HepG2 (cell line): ENCODE measurements at regions of chr1 and their contacts with region 1.

Region 1: DNA sequence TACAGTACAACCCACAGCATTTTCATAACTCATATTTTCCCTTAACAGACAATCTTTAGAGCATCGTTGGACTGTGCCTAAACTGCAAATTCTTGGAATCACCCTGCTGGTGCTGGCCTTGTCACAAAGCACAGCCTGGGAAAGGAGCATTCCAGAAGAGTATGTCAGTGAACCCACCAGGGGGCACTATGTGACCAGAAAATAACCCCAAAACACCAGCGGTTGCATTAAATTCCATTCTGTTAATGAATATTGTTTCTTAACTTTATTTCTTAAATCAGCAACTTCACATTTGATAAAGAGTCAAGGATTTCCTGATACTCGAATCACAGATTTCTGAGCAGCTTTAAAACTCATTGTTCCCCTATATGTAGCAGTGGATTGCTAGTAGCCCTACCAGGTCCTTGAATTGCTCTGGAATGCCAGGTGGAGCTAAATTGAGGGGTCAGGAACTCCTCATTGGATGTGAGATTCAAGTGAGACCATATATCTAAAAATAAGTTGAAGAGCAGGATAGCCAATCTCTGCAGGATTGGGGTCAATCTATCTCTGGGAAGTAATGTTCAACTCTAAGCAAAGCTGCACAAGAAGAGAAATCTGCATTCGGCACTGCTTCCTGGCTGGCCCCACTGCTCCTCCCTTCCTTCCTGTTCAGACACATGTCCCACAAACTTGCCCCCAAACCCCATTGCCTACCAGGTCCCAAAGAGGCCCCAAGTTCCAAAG is 12.7 kb upstream of the RAB4A start:
- DNase-seq: peak; percentile 66
- ATAC-seq: peak; percentile 87
- H3K4me3 ChIP-seq: no peak overlapping the region
- H3K27ac ChIP-seq: no peak overlapping the region
- H3K4me1 ChIP-seq: peaks cover 35% of the 10 kb centered on the region
- H3K27me3 ChIP-seq: no peaks in the 10 kb centered on the region
- CTCF ChIP-seq: peak; percentile 84
- EP300 ChIP-seq: no peak
- POLR2A ChIP-seq: no peak
- RAD21 ChIP-seq: peak; percentile 84

Region 2: GRCh38 chr1:228664399-228664914 is 593.7 kb before region 1 on chr1:
- CTCF ChIA-PET with region 1: interaction called, 4 read pairs
- POLR2A ChIA-PET with region 1: no interaction called
- in situ Hi-C with region 1: no loop called
- intact Hi-C with region 1: loop called (anchors 1 kb)
- DNase-seq: peak; percentile 68
- ATAC-seq: peak; percentile 62; the same call in 2 of the 3 replicates
- H3K4me3 ChIP-seq: peak overlapping the region in 2 of 3 experiments; percentile 34 to 40; a peak in 2 of 6 replicates
- H3K27ac ChIP-seq: no peak overlapping the region
- H3K4me1 ChIP-seq: peaks cover 17% of the 10 kb centered on the region
- H3K27me3 ChIP-seq: no peaks in the 10 kb centered on the region
- CTCF ChIP-seq: peak; percentile 85
- EP300 ChIP-seq: no peak
- POLR2A ChIP-seq: no peak
- RAD21 ChIP-seq: peak; percentile 89

Region 3: DNA sequence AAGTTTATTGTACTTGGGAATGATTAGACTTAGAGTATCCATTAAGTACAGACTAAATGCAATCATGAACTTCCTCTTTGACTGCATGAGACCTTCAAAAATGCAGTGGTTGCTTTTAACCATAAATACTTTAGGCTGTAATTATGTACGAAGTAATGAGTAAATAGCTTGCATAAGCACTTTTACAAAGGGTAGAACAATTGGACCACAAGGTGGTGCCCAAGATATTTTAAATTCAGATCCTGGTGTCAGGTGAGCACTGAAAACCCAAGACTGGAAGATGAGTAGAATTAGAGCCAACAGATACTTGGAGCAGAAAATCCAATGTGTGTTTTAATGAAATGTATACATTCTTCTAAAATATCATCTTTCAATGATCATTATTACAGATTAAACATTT is 566.3 kb before region 1 on chr1:
- CTCF ChIA-PET with region 1: interaction called, 6 read pairs
- POLR2A ChIA-PET with region 1: no interaction called
- in situ Hi-C with region 1: no loop called
- intact Hi-C with region 1: loop called (anchors 10 kb)
- DNase-seq: peak; percentile 72
- ATAC-seq: 0 out of 3 replicates have a peak, but pooled peaks have one; percentile 40
- H3K4me3 ChIP-seq: no peak overlapping the region
- H3K27ac ChIP-seq: no peak overlapping the region
- H3K4me1 ChIP-seq: peaks cover 17% of the 10 kb centered on the region; the same call in 1 of the 2 replicates
- H3K27me3 ChIP-seq: no peaks in the 10 kb centered on the region; a peak in 1 of 5 replicates
- CTCF ChIP-seq: peak; percentile 60
- EP300 ChIP-seq: no peak
- POLR2A ChIP-seq: no peak
- RAD21 ChIP-seq: peak; percentile 53

Region 4: DNA sequence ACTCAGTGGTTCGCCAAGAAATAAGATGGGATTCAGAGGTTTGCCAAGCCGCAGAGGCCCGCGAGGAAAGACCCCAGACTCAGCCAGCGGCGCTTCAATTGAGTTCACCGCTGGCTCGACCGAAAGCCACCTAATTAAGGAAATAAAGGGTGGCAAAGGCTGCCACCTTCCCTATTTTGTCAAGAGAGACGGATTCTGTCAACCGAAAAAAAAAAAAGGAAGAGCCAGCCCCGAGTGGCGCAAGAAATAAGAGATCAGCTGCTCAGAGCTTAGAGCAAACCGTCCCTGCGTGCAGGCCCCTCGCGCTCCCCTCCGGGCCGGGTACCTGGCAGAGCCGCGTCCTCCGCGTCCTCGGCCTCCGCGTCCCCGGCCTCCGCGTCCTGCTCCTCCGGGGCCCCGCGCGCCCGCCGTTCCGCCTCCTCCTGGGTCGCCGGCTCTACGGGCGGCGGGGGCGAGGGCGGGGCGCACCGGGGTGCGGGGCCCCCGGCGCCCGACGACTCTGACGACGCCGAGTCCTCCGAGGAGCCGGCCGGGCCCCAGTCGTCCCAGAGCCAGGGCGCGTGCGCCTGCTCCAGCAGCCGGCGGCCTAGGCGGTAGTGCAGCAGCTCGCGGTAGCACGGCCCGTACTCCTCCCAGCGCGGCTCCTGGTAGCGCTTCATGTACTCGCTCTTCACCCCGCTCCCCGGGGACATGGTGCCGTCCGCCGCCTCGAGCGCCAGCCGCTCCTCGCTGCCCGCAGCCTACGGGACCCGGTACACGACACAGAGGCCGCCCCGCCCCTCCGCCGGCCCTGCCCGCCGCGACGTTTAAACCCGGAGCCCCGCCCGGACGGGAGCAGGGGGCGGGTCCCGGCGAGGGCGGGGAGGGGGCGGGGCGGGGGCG is 83.8 kb after region 1 on chr1:
- CTCF ChIA-PET with region 1: no interaction called
- POLR2A ChIA-PET with region 1: no interaction called
- in situ Hi-C with region 1: no loop called
- intact Hi-C with region 1: loop called (anchors 5 kb)
- DNase-seq: peak; percentile 51
- ATAC-seq: peak; percentile 82
- H3K4me3 ChIP-seq: peak overlapping the region; percentile 77 to 95 (median 83)
- H3K27ac ChIP-seq: peak overlapping the region; percentile 75
- H3K4me1 ChIP-seq: peaks cover 62% of the 10 kb centered on the region
- H3K27me3 ChIP-seq: peaks cover 0 to 6% of the 10 kb centered on the region in 2 experiments; a peak in 1 of 5 replicates
- CTCF ChIP-seq: no peak
- EP300 ChIP-seq: no peak
- POLR2A ChIP-seq: peak; percentile 48 to 79; a peak in 3 of 4 replicates
- RAD21 ChIP-seq: no peak; the same call in 1 of the 2 replicates

Region 5: GRCh38 chr1:229452956-229453801 is 195.0 kb after region 1 on chr1:
- CTCF ChIA-PET with region 1: interaction called, 11 read pairs
- POLR2A ChIA-PET with region 1: no interaction called
- in situ Hi-C with region 1: no loop called
- intact Hi-C with region 1: loop called (anchors 1 kb)
- DNase-seq: peak; percentile 13
- ATAC-seq: no peak
- H3K4me3 ChIP-seq: no peak overlapping the region
- H3K27ac ChIP-seq: no peak overlapping the region
- H3K4me1 ChIP-seq: no peaks in the 10 kb centered on the region
- H3K27me3 ChIP-seq: no peaks in the 10 kb centered on the region
- CTCF ChIP-seq: peak; percentile 53
- EP300 ChIP-seq: no peak
- POLR2A ChIP-seq: no peak
- RAD21 ChIP-seq: no peak

Region 6: DNA sequence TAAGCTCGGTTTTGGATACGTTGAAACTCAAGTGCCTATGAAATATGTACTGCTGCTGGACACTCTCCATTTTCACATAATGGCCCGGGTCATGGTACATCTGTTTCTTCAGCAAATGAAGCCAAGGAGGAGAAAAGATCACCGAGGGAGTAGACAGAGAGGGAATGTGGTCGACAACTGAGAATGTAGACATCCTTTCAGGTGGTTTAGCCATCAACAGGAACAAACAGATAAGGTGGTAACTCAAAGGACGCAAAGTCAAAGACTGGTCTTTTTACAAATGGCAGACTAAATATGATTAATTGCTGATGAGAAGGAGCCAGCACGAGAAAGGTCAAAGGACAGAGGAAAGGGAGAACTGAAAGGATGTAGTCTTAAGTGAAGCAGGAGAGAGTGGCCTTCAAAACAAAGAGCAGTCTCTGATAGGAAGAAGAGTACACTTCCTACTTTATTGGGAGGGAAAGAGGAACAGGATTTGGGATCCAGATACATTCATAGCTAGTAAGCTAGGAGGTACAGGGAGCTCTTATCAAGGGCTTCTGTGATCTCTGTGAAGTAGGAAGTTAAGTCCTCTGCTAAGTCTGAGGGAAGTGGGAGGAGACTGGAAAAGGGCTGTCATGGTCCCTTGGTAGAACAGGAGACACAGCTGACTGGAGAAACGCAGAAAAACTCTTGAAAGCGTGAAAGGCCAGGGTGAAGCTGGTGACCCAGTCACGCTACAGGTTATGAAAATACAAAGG is 221.6 kb after region 1 on chr1:
- CTCF ChIA-PET with region 1: interaction called, 24 read pairs
- POLR2A ChIA-PET with region 1: no interaction called
- in situ Hi-C with region 1: loop called (anchors 5 kb)
- intact Hi-C with region 1: loop called (anchors 1 kb)
- DNase-seq: no peak
- ATAC-seq: no peak
- H3K4me3 ChIP-seq: no peak overlapping the region
- H3K27ac ChIP-seq: no peak overlapping the region
- H3K4me1 ChIP-seq: peaks cover 7% of the 10 kb centered on the region
- H3K27me3 ChIP-seq: no peaks in the 10 kb centered on the region
- CTCF ChIP-seq: no peak
- EP300 ChIP-seq: no peak
- POLR2A ChIP-seq: no peak
- RAD21 ChIP-seq: no peak

Region 7: GRCh38 chr1:229514578-229515275 is 256.5 kb after region 1 on chr1:
- CTCF ChIA-PET with region 1: no interaction called
- POLR2A ChIA-PET with region 1: no interaction called
- in situ Hi-C with region 1: no loop called
- intact Hi-C with region 1: loop called (anchors 1 kb)
- DNase-seq: peak; percentile 69
- ATAC-seq: peak; percentile 95
- H3K4me3 ChIP-seq: no peak overlapping the region
- H3K27ac ChIP-seq: no peak overlapping the region
- H3K4me1 ChIP-seq: peaks cover 6% of the 10 kb centered on the region
- H3K27me3 ChIP-seq: no peaks in the 10 kb centered on the region
- CTCF ChIP-seq: peak; percentile 83
- EP300 ChIP-seq: no peak
- POLR2A ChIP-seq: no peak
- RAD21 ChIP-seq: peak; percentile 60